Thyroid gland (tissue), 4 donors: ENCODE measurements at regions of chr20 and their contacts with region 1.

Region 1: DNA sequence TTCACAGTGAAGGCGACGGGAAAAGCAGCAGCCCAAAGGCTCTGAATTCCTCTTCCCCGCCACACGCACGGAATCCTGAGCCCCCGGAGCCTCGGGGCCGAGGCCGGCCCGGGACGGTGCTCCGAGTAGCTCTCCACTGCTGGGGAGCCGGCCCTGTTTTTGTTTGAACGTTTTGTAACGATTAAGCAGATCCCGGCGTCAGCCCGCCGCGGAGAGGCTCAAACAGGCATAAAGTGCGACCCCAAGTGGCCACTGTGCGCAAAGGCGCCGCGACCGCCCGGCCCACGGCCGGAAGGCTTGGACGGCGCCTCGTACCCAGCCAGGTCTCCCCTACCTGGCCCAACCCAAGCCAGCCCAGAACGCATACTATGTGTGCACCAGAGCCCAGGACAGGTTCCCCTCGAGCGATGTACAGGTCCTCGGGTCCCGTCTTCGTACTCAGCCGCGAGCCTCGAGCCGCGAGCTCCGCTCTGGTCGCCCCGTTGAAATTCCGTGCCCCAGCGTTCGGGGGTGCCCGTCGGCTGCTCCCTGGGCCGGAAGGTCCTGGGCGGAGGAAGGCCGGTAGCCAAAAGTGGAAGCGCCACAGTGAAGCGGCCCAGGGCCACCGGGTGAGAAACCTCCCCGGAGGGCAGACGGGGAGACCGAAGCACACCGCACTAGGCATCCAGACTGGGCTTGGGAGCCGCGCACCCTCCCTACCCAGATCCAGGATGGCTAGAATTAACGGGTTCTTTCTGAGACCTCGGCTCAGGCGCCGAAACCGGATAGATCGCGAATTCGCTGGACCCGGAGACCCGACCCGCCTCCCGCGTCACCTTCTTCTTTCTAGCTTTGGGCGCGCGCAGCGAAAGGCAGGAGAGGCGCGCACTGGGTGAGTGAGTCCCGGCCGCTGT is 1.2 kb upstream of the MAFB start:
- DNase-seq: peak; percentile 94 to 96
- H3K4me3 ChIP-seq: peak overlapping the region; percentile 13 to 60 (median 17)
- H3K27ac ChIP-seq: peak overlapping the region; percentile 94 to 98 (median 96)
- H3K4me1 ChIP-seq: peaks cover 5 to 14% of the 10 kb centered on the region in 2 donors
- H3K27me3 ChIP-seq: no peaks in the 10 kb centered on the region
- CTCF ChIP-seq: peak; percentile 74 to 95 (median 86)
- POLR2A ChIP-seq: peak in 1 of 2 donors; percentile 31

Region 2: DNA sequence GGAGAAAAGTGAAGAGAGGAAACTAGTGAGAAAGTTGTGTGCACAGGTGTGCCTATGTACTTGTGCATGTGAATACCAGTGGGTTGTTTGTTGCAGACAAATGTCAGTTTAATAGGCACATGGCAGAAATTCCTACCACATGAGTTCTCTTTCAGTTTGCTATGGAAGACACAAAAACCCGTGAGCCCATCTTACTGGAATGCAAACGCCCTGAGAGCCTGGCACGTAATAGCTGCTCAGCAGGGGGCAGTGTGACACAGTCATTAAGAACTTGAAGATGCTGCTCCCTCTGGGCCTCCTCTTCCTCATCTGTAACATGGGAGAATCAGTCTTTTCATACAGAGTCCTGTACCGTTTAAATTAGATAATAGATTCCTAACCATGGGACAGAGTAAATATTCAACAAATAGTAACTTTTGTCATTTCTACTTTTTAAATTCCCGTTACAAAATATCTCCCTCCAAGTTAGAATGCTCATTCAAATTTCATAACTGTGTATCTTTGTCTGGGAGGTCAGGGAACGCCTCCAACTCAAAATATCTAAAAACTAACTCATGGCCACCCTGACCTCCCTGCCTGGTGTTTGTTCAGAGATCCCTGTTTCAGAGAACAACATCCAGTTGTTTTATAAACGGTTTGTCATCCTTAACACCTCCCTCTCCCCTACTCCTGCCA is 804.1 kb before region 1 on chr20:
- intact Hi-C with region 1: loop called (anchors 10 kb)
- DNase-seq: peak; percentile 58 to 69
- H3K4me3 ChIP-seq: no peak overlapping the region
- H3K27ac ChIP-seq: no peak overlapping the region
- H3K4me1 ChIP-seq: no peaks in the 10 kb centered on the region
- H3K27me3 ChIP-seq: no peaks in the 10 kb centered on the region
- CTCF ChIP-seq: peak in 4 of 6 experiments; percentile 43 to 59 (median 56)
- POLR2A ChIP-seq: no peak

Region 3: GRCh38 chr20:40160097-40160550 is 530.1 kb before region 1 on chr20:
- intact Hi-C with region 1: loop called (anchors 10 kb)
- DNase-seq: peak; percentile 46 to 55
- H3K4me3 ChIP-seq: no peak overlapping the region
- H3K27ac ChIP-seq: no peak overlapping the region
- H3K4me1 ChIP-seq: no peaks in the 10 kb centered on the region
- H3K27me3 ChIP-seq: no peaks in the 10 kb centered on the region
- CTCF ChIP-seq: peak; percentile 50 to 71 (median 62)
- POLR2A ChIP-seq: no peak

Region 4: DNA sequence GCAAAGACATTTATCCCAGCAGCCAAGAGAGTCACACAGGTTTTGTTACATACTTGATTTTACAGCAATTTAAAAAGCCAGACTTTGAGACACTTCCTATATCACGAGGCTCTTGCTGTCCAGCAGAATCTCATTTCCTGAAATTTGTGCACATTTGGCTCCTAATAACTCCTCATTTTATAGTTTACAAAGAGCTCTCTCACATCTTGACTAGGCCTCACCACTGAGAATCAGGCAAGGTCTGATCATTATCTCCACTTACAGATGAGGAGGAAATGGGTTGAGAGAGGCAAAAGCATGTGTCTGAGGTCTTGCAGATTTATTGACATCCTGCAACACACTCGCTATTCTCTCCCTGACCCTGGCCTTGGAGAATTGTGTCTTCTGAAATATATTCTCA is 428.0 kb before region 1 on chr20:
- intact Hi-C with region 1: loop called (anchors 5 kb)
- DNase-seq: no peak
- H3K4me3 ChIP-seq: no peak overlapping the region
- H3K27ac ChIP-seq: no peak overlapping the region
- H3K4me1 ChIP-seq: no peaks in the 10 kb centered on the region
- H3K27me3 ChIP-seq: no peaks in the 10 kb centered on the region
- CTCF ChIP-seq: no peak
- POLR2A ChIP-seq: no peak

Region 5: DNA sequence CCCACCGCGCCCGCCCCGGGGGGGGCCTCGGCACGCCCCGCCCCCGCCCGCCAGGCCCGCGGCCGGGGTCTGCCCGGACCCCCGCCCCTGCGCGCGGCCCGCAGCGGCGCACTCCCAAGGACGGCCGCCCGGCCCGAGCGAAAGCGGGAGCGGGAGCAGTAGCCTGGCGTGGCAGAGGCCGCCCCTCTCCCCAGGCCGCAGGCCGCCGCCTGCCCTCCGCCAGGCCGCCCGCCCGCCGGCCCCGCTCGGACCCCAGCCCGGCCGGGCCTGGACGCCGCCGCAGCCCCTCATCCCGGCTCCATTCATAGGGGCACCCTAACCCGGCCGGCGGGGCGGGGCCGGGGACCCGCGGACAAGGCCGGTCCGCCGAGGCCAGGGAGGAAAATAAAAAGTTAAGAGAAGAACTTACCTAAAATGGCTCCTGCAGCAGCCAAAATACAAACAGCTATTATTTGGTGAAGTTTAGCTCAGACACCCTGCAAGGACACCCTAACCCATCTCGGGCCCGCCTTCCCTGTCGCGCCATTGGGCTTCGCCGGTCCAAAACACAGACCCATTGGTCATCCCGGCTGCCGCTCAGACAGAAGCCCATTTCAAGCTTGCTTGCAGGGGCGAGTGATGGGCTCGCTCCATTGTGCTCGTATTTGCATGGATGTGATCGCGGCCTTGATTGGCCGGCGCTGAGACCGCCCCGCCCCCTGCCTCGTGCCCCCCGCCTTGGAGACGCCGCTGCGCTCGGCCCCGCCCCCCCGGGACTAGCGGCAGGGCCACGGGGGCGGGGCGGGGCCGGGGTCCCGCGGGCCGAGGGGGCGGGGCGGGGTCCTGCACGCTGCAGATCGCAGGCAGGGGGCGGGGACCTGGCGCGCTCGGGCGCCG is 928.0 kb after region 1 on chr20 and contains the start of gene CHD6:
- intact Hi-C with region 1: loop called (anchors 10 kb)
- DNase-seq: peak; percentile 100
- H3K4me3 ChIP-seq: peak within 1 kb of the TSS; percentile 15 to 74 (median 66)
- H3K27ac ChIP-seq: peak within 1 kb of the TSS; percentile 29 to 79 (median 54)
- H3K4me1 ChIP-seq: peaks cover 26 to 37% of the 10 kb centered on the region in 2 donors
- H3K27me3 ChIP-seq: no peaks in the 10 kb centered on the region
- CTCF ChIP-seq: no peak
- POLR2A ChIP-seq: peak in 1 of 2 donors; percentile 83
- total RNA-seq, gene CHD6: 58.0 to 104 (median 81.6) TPM